ENCODE measurements at regions of chr9 and their contacts with region 1.

Region 1: DNA sequence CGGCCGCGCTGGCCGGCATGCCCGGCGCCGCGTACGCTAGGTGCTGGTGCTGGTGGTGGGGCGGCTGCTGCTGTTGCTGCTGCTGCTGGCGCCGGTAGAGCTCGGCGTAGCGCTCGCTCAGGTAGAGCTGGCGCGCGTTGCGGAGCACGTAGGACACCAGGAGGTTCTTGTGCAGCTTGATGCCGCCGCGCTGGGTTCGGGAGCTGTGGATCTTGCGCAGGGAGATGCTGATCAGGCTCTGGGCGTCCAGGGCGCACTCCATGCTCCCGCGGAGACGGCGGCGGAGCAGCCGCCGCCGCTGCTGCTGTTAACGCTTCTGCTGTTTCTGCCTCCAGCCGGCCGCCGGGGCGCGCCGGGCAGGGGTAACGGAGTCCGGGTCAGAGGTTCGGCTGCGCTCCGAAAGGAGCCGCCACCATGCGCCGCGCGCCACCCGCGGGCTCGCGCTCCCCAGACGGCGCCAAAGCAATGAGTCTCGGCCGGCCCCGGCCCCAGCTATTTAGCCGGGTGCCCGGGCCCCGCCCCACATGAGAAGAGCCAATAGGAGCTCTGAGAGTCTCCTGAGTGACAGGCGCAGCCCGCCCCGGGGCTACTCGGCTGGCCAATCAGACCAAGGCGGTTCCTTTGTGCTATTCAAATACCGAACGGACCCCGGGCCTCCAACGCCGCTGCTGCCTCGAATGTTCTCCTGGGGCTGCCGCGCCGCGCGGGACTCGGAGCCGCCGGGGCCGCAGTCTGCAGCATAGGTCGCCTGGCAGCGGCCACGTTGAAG is at the start of gene IER5L:
- DNase-seq: no peak
- H3K4me3 ChIP-seq: peak within 1 kb of the TSS; percentile 95
- H3K27me3 ChIP-seq: no peaks in the 10 kb centered on the region
- CTCF ChIP-seq: no peak
- polyA plus RNA-seq, gene IER5L: 7.3 and 8.7 TPM in 2 replicates

Region 2: DNA sequence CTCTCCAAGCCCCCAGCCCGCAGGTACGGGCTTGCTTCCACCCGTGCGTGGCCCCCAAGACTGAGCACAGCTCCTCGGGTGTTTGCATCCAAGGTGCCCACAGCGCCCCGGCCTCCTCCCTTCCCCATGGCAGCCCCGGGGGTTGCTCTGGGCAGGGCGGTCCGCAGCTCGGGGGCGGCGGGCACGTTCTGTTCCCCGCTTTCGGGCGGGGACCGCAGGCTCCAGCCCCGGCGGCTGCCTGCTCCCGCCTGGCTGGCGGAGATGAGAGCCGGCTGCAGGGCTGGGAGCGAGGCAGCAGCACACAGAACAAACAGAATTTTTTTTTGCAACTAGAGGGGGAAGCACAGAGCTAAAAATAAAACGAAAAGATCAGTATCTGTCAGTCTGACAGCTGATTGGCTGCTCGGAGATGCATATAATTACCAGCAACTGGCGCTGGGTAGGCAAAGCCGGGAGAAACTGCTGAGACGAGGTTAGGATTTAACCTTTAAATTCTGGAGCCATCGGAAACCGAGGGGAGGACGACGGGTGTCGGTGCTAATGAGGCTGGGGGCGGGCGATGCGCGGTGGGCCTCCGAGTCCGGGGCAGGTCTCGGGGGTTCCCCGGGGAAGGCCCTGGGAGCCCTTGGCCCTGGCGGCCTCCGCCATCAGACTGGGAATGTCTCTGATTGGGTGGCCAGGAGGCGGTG is 142.7 kb after region 1 on chr9:
- CTCF ChIA-PET with region 1: interaction called, 18 read pairs
- POLR2A ChIA-PET with region 1: interaction called, 6 read pairs
- DNase-seq: peak; percentile 72
- H3K4me3 ChIP-seq: peak overlapping the region; percentile 51
- H3K27me3 ChIP-seq: no peaks in the 10 kb centered on the region
- CTCF ChIP-seq: no peak

Region 3: GRCh38 chr9:129460323-129461261 is 282.6 kb after region 1 on chr9:
- CTCF ChIA-PET with region 1: interaction called, 13 read pairs
- POLR2A ChIA-PET with region 1: interaction called, 15 read pairs
- DNase-seq: peak; percentile 90
- H3K4me3 ChIP-seq: peak overlapping the region; percentile 30
- H3K27me3 ChIP-seq: no peaks in the 10 kb centered on the region
- CTCF ChIP-seq: peak; percentile 14; the same call in 1 of the 2 replicates

Region 4: DNA sequence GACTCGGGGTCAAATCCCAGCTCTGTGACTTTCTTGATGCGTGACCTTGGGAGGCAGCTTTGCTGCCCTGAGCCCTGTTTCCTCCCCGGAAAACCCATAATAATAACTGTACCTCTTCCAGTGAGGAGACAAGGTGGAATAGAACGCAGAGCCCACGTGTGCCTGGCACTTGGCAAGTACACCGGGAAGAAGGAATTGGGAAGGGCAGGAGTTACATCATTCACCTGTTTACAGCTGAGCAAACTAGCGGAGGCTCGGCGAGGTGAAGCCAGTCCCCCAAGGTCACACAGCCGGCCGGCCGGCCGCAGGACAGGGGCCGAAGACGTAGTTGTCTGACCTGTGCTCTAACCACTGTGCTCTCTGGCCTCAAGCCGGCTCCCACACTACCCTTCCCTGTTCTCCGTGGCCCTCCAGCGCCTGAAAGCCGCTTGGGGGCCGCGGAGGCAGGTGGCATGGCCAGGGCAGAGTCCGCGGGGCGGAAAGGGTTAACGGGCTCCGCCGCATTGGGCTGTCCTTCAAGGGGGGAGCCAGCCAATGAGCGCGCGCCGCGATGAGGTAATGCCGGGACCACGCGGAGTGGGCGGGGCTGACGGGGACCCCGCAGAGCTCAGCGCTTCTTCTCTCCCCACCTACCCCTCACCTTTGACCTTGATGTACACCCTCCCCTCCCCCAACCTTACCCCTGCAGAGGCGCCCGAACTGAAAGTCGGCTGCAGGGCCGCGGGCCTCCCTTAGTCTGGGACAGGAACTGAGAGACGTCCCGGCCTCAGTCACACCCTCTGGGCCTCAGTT is 317.8 kb after region 1 on chr9:
- CTCF ChIA-PET with region 1: interaction called, 24 read pairs
- POLR2A ChIA-PET with region 1: interaction called, 6 read pairs
- DNase-seq: no peak
- H3K4me3 ChIP-seq: peak overlapping the region; percentile 82
- H3K27me3 ChIP-seq: no peaks in the 10 kb centered on the region
- CTCF ChIP-seq: no peak

Region 5: DNA sequence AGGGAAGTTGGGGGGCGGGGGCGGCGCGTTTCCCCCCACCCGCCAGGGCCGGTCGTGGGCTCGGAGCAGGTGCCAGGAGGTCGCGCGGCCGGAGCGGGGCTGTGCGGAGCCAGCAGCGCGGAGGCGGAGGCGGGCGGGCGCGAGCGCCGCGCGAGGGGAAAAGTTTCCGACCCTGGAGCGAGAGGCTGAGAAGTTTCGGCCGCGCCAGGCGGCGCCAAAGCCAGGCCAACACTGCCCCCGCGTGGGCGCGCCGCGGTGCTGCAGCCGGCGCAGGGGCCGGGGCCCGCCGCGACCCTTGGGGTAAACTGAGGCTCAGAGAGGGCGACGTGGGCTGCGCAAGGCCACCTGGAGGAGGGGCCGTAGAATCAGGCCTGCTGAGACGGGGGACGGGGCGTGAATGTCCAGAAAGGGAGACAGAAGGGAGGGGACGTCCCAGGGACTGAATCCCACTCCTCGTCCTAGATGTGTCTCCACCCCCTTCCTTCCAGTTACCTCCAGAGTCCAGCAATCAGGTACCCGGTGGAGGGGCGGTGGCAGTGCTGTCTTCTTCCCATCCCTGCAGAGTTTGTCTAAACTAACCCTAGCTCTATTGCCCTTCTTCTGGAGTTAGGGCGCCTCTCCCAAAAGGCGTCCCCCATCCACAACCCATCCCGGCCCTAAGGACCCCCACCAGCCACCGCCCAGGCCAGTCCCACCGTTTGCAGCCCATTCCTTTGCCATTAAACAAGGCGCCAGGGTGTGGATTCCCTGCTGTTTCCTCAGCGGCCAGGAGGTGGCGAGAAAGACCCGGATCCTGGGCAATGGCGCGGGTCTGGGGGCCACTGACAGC is 432.7 kb after region 1 on chr9:
- CTCF ChIA-PET with region 1: interaction called, 11 read pairs
- POLR2A ChIA-PET with region 1: no interaction called
- DNase-seq: no peak
- H3K4me3 ChIP-seq: peak overlapping the region; percentile 51
- H3K27me3 ChIP-seq: no peaks in the 10 kb centered on the region
- CTCF ChIP-seq: peak; percentile 90

Region 6: DNA sequence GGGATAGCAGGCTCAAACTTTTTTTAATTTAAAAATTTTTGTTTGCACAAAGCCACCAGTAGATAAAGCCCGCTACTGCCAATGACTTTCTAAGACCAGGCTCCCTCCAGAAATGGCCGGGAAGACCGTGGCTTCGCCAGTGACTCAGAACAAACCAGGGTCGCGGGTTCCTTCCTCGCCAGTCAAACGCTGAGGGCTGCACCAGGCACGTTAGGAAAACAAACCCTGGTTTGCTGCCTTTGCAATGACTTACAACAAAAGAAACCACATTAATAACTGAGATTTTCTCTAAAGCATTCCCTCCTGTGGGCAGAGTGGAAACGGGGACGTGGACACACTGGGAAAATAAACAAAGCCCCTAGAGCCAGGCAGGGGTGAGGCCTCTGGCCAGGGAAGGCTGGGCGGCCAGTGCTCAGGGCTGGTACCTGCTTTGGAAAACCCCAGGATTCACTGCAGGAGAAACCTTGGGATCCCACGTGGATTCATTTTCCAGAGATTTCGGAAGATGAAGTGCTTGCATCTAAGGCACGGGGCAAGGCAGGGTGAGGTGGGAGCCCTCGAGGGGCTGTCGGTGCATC is 491.3 kb after region 1 on chr9:
- CTCF ChIA-PET with region 1: no interaction called
- POLR2A ChIA-PET with region 1: no interaction called
- DNase-seq: peak; percentile 26
- H3K4me3 ChIP-seq: no peak overlapping the region
- H3K27me3 ChIP-seq: no peaks in the 10 kb centered on the region
- CTCF ChIP-seq: no peak

Measured in BJ (cell line).